ENCODE measurements at regions of chr15 and their contacts with region 1.

Region 1: GRCh38 chr15:89430530-89431341 is 65.6 kb downstream of the RHCG start:
- DNase-seq: peak; percentile 14 to 88
- H3K4me3 ChIP-seq: peak overlapping the region; percentile 48 to 67
- H3K27ac ChIP-seq: no peak overlapping the region
- H3K4me1 ChIP-seq: peaks cover 0 to 2% of the 10 kb centered on the region in 2 donors
- H3K27me3 ChIP-seq: no peaks in the 10 kb centered on the region
- CTCF ChIP-seq: peak; percentile 93 to 99 (median 98)

Region 2: DNA sequence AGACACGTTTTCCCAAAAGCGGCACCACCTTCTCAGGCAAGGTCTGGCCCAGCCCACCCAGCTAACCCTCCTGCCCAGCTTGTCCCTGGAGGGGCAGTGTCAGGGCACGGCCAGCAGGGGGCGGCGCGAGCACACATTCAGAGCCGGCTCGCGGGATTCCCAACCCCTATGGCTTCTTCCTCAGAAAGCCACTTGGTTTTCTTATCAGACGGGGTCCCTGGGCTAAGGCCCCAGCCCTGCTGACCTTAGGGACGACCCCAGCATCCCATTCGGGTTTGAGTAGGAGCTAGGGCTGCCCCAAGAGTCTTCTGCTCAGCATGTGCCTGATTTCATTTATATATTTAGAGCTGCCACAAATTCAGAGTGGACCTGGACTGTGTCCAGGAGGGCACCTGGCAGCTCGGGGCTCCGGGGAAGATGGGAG is 223.8 kb before region 1 on chr15:
- intact Hi-C with region 1: loop called (anchors 2 kb)
- DNase-seq: peak in 1 of 2 donors; percentile 84
- H3K4me3 ChIP-seq: peak overlapping the region in 1 of 2 donors; percentile 47
- H3K27ac ChIP-seq: no peak overlapping the region
- H3K4me1 ChIP-seq: peaks cover 0 to 3% of the 10 kb centered on the region in 2 donors
- H3K27me3 ChIP-seq: no peaks in the 10 kb centered on the region
- CTCF ChIP-seq: peak; percentile 81 to 99 (median 98)

Region 3: GRCh38 chr15:89358755-89359439 is 71.8 kb before region 1 on chr15:
- intact Hi-C with region 1: loop called (anchors 1 kb)
- DNase-seq: peak in 1 of 2 donors; percentile 80
- H3K4me3 ChIP-seq: peak overlapping the region; percentile 15 to 60
- H3K27ac ChIP-seq: no peak overlapping the region
- H3K4me1 ChIP-seq: peaks cover 3 to 8% of the 10 kb centered on the region in 2 donors
- H3K27me3 ChIP-seq: peaks cover 30% of the 10 kb centered on the region
- CTCF ChIP-seq: peak; percentile 97 to 98 (median 97)

Measured in ascending aorta (tissue), 2 donors.